CD4-positive, alpha-beta memory T cell (primary cell): ENCODE measurements at regions of chr17 and their contacts with region 1.

Region 1: GRCh38 chr17:32503251-32504165 is 16.7 kb downstream of the CDK5R1 start:
- DNase-seq: peak; percentile 64 to 77 (median 74)
- H3K4me3 ChIP-seq: peak overlapping the region; percentile 4 to 16
- H3K4me3 Mint-ChIP-seq: peak overlapping the region; percentile 66 to 88 (median 79)
- H3K27ac ChIP-seq: peak overlapping the region; percentile 73
- H3K27ac Mint-ChIP-seq: peak overlapping the region; percentile 95 to 99 (median 96)
- H3K4me1 ChIP-seq: peaks cover 70% of the 10 kb centered on the region
- H3K4me1 Mint-ChIP-seq: peaks cover 46 to 69% (median 59%) of the 10 kb centered on the region in 4 donors
- H3K27me3 ChIP-seq: no peaks in the 10 kb centered on the region
- H3K27me3 Mint-ChIP-seq: no peaks in the 10 kb centered on the region

Region 2: DNA sequence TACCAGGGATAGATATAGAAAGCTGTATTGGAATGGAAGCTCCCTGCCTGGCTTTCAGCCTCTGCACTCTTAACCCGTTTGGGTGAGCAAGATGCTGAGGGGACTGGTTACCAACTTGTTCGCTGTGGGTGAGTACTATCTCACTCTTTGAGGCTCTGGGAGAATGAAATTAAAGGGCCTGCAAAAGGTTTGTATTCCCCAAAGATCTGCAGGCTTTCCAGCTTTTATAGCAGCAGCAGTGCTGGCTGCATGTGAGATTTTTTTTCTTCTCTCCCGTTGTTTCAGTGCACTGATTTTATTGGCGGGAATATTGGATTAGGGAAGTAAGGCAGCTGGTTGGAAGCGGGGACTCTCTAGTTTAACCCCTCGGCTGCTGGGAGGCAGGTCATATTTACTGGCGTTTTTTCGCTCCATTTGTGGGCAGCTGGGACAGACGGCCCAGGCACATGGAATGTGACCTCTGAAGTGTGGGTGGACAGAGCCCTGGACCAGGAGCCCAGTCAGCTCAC is 192.4 kb before region 1 on chr17:
- CTCF ChIA-PET with region 1: no interaction called
- POLR2A ChIA-PET with region 1: no interaction called
- intact Hi-C with region 1: no loop called
- DNase-seq: no peak
- H3K4me3 ChIP-seq: no peak overlapping the region
- H3K4me3 Mint-ChIP-seq: no peak overlapping the region
- H3K27ac ChIP-seq: no peak overlapping the region
- H3K27ac Mint-ChIP-seq: no peak overlapping the region
- H3K4me1 ChIP-seq: no peaks in the 10 kb centered on the region
- H3K4me1 Mint-ChIP-seq: no peaks in the 10 kb centered on the region
- H3K27me3 ChIP-seq: no peaks in the 10 kb centered on the region
- H3K27me3 Mint-ChIP-seq: peaks cover 2 to 4% of the 10 kb centered on the region in 2 donors

Region 3: DNA sequence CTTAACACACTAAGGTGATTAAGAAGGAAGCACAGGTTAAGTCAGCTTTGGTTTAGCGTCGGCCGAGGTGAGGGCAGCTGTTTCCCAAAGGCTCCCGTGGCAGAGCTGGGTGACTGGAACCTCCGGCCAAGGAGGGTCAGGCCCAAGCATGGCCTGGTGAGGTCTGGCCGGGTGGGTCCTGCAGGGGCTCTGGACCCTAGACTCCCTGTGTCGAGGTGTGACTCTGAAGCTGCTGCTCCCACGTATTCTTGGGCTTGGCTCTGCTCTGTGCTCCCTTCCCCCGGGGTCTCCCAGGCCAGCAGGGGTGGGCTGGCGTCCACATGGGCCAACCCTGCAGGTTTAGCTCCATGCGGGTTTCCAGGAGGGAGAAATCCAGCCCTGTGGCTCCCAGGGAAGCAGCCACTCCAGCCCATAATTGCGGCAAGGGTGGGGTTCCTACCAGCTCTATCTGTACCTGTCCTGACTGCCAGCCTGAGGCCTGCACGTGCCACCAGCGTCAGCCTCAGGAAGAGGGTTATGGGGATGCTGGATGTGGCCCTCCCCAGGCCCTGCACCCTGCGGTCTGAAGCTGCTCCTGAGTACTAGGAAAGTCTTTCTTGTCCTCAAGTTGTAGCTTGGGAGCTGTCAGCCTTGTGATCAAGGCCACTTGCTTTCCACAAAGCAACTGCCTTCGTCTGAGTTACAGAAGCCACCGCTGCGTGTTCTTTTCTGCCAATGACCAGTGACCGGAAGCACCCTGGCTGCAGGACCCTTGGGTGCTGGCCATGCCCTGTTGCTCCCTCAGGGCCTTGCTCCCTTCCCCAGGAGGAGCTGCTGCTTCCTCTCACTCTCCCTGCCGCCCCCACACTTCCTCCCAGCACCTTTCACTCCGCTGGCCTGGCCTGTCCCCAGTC is 11.9 kb before region 1 on chr17:
- CTCF ChIA-PET with region 1: interaction called, 5 read pairs
- POLR2A ChIA-PET with region 1: interaction called, 30 read pairs
- intact Hi-C with region 1: loop called (anchors 1 kb)
- DNase-seq: no peak
- H3K4me3 ChIP-seq: no peak overlapping the region
- H3K4me3 Mint-ChIP-seq: peak overlapping the region; percentile 36 to 89 (median 70)
- H3K27ac ChIP-seq: peak overlapping the region; percentile 23
- H3K27ac Mint-ChIP-seq: peak overlapping the region; percentile 65 to 96 (median 88)
- H3K4me1 ChIP-seq: peaks cover 81% of the 10 kb centered on the region
- H3K4me1 Mint-ChIP-seq: peaks cover 27 to 69% (median 56%) of the 10 kb centered on the region in 4 donors
- H3K27me3 ChIP-seq: no peaks in the 10 kb centered on the region
- H3K27me3 Mint-ChIP-seq: no peaks in the 10 kb centered on the region